ENCODE measurements at regions of chr10 and their contacts with region 1.

Region 1: DNA sequence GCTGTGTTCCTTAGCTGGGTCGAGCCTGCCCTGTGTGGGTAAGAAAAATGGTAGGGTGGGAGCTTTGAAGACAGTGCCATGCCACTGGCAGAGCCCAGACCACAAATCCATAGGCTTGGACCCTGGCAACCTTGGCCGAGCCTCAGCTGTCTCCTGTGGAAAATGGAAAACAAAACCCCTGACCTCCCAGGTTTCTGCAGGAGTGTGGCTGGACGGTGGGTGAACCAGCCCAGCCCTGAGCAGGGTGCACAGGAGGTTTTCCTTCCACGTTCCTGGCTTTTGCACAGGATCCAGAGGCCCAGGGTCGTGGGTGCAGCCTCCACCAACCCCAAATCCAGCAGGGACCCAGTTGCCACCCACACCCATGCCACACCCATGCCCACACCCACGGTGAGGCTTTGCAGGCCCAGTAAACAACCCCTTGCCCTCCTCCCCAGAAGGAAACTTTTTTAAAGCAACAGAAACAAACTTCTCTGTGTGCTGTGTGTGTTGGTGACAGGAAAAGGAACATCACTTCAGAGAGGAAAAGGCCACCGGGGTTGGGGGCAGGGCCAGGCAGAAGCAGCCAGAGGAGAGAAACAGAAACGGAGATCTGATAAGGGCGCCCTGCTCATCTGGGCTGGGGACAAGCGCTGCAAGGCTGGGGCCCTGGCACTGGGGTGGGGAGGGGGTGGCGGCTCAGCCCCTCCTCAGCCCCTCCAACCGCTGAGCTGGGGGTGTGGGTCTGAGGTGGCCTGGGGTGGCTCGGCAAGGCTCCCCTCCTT is 20.7 kb upstream of the ZMIZ1 start:
- DNase-seq: peak; percentile 22 to 82 (median 57)
- ATAC-seq: peak; percentile 78
- H3K4me3 ChIP-seq: peak overlapping the region; percentile 40 to 53
- H3K4me3 Mint-ChIP-seq: peak overlapping the region; percentile 74
- H3K27ac ChIP-seq: peak overlapping the region; percentile 49 to 79
- H3K27ac Mint-ChIP-seq: peak overlapping the region; percentile 85
- H3K4me1 ChIP-seq: peaks cover 47% of the 10 kb centered on the region
- H3K4me1 Mint-ChIP-seq: peaks cover 51% of the 10 kb centered on the region
- H3K27me3 ChIP-seq: no peaks in the 10 kb centered on the region
- H3K27me3 Mint-ChIP-seq: no peaks in the 10 kb centered on the region
- CTCF ChIP-seq: no peak

Region 2: GRCh38 chr10:79001082-79001885 is 46.8 kb before region 1 on chr10:
- CTCF ChIA-PET with region 1: no interaction called
- POLR2A ChIA-PET with region 1: no interaction called
- intact Hi-C with region 1: no loop called
- DNase-seq: no peak
- ATAC-seq: no peak
- H3K4me3 ChIP-seq: no peak overlapping the region
- H3K4me3 Mint-ChIP-seq: no peak overlapping the region
- H3K27ac ChIP-seq: no peak overlapping the region
- H3K27ac Mint-ChIP-seq: no peak overlapping the region
- H3K4me1 ChIP-seq: no peaks in the 10 kb centered on the region
- H3K4me1 Mint-ChIP-seq: peaks cover 8% of the 10 kb centered on the region
- H3K27me3 ChIP-seq: no peaks in the 10 kb centered on the region
- H3K27me3 Mint-ChIP-seq: peaks cover 3% of the 10 kb centered on the region
- CTCF ChIP-seq: no peak

Region 3: GRCh38 chr10:79023240-79024162 is 24.6 kb before region 1 on chr10:
- CTCF ChIA-PET with region 1: interaction called, 3 read pairs
- POLR2A ChIA-PET with region 1: interaction called, 8 read pairs
- intact Hi-C with region 1: loop called in 1 of 2 experiments (anchors 2 kb)
- DNase-seq: peak in 1 of 9 experiments; percentile 13
- ATAC-seq: no peak
- H3K4me3 ChIP-seq: no peak overlapping the region
- H3K4me3 Mint-ChIP-seq: no peak overlapping the region
- H3K27ac ChIP-seq: no peak overlapping the region
- H3K27ac Mint-ChIP-seq: no peak overlapping the region
- H3K4me1 ChIP-seq: peaks cover 42% of the 10 kb centered on the region
- H3K4me1 Mint-ChIP-seq: peaks cover 39% of the 10 kb centered on the region
- H3K27me3 ChIP-seq: no peaks in the 10 kb centered on the region
- H3K27me3 Mint-ChIP-seq: no peaks in the 10 kb centered on the region
- CTCF ChIP-seq: no peak